Common myeloid progenitor, CD34-positive (primary cell): ENCODE measurements at regions of chr14 and their contacts with region 1.

Region 1: GRCh38 chr14:69475194-69475818 is 9.2 kb upstream of the PLEKHD1 start:
- DNase-seq: peak; percentile 61 to 74 (median 71)
- H3K4me3 ChIP-seq: no peak overlapping the region
- H3K27ac ChIP-seq: no peak overlapping the region
- H3K4me1 ChIP-seq: no peaks in the 10 kb centered on the region
- H3K27me3 ChIP-seq: peaks cover 0 to 4% (median under 1%) of the 10 kb centered on the region in 5 experiments

Region 2: DNA sequence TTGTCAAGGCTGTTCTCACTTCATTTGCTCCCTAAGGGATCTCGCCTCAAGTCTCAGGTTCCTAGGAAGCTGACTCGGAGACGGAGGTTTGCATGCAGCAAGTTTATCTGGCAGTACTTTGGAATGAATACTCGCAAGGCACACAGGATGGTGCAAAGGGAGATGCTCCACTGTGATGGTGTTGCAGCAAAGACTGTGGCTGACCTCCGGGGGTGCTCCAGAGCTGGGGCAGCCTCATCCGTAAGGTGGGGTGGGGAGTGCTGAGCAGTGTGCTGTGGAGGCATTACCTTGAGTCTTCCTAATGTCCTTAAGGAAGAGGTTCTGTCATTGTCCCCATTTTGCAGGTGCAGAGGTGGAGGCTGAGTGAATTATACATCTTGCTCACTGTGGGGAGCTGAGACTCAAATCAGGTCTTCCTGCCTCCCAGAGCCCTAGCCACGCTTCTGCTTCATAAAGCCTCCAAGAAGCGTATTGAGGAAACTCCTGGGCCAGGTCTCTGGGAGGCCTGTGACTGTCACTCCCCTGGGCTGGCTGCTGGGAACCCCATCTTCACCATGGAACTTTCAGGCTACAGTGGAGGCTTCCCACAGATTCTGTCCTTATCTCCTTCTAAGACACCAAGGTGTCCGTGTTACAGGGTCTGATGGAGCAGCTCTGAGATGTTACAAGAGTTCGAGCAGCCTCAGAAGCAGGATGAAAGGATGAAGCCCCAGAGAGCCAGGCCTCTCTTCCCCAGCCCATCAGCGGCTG is 175.8 kb before region 1 on chr14:
- CTCF ChIA-PET with region 1: no interaction called
- POLR2A ChIA-PET with region 1: no interaction called
- DNase-seq: peak in 1 of 3 donors; percentile 3
- H3K4me3 ChIP-seq: no peak overlapping the region
- H3K27ac ChIP-seq: no peak overlapping the region
- H3K4me1 ChIP-seq: no peaks in the 10 kb centered on the region
- H3K27me3 ChIP-seq: peaks cover 0 to 3% (median 3%) of the 10 kb centered on the region in 5 experiments

Region 3: DNA sequence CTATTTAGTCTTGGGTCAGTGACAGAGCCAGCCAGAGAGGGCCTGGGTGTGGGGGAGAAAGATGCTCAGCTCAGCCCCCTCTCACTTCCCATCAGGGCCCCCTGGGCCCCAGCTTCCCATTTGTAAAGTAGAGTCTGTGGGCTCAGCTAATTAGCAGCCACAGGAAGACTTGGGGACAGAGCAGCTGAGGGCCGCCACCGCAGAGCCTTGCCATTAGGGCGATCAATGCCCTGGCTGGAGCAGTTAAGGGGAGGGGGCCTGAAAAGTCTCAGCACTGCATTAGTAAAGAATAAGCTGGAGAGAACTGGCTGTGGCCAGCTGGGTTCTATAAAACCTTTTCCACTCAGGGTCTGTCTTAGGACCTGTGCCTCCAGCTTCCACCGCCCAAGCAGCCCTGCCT is 11.9 kb after region 1 on chr14:
- CTCF ChIA-PET with region 1: interaction called, 17 read pairs
- POLR2A ChIA-PET with region 1: interaction called, 6 read pairs
- DNase-seq: no peak
- H3K4me3 ChIP-seq: no peak overlapping the region
- H3K27ac ChIP-seq: no peak overlapping the region
- H3K4me1 ChIP-seq: peaks cover 0 to 18% (median 10%) of the 10 kb centered on the region in 4 experiments
- H3K27me3 ChIP-seq: peaks cover 0 to 73% (median 41%) of the 10 kb centered on the region in 5 experiments